ENCODE measurements at regions of chr10 and their contacts with region 1.

Region 1: DNA sequence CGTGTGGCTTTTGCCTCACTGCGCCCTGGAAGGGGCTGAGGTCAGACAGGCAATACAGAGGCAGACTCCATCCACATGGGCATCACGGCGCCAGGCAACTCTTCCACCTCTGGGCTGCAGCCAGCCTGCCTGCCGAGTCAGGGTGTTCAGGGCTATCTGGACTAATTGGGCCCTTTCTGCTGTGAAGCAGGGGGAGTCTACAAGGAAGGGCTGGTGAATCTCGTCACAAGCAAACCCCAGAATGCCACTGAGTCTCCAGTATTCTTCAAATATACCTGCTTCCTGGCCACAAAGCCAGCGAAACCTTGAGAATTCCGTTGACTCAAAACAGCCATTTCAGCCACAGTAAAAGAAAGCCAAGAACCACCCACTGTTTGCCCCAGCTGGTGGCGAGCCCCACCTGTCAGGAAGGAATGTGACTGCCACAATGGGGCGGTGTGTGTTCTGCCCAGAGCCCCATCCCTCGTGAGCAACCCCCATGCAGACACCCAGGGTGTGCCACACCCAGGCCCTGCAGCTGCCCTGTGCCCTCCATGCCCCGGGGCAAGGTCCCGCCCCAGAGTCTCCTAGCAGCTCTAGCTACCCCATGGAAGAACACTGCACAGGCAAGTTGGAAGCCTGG is 117.3 kb downstream of the FAM53B start:
- DNase-seq: no peak
- H3K4me3 ChIP-seq: no peak overlapping the region
- H3K27ac ChIP-seq: no peak overlapping the region
- H3K4me1 ChIP-seq: peaks cover 30% of the 10 kb centered on the region
- H3K27me3 ChIP-seq: no peaks in the 10 kb centered on the region
- CTCF ChIP-seq: no peak
- EP300 ChIP-seq: no peak
- POLR2A ChIP-seq: no peak

Region 2: DNA sequence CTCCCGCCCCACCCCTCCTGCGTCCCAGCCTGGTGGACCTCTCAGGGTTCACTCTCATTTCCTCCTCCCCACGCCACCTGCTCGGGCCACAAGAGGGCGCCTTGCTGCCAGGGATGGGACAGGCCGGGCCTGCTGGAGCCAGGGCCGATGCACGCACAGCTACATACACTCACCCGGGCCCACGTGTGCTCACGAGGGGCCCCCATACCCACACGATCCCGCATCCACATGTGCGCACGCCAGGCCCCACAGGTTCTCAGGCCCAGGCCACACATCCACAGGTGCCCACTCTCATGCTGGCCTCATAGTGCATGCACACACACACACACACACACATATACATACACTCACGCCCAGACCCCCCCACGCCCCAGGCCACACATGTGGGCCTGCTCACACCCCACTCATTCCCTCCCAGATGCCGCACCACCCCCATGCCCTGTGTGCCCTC is 96.6 kb before region 1 on chr10:
- intact Hi-C with region 1: loop called in 1 of 4 experiments (anchors 10 kb)
- DNase-seq: peak; percentile 84 to 92 (median 89)
- H3K4me3 ChIP-seq: no peak overlapping the region
- H3K27ac ChIP-seq: no peak overlapping the region
- H3K4me1 ChIP-seq: peaks cover 10% of the 10 kb centered on the region
- H3K27me3 ChIP-seq: no peaks in the 10 kb centered on the region
- CTCF ChIP-seq: peak; percentile 78 to 86 (median 86)
- EP300 ChIP-seq: no peak
- POLR2A ChIP-seq: no peak

Region 3: GRCh38 chr10:124539935-124540641 is 86.8 kb before region 1 on chr10:
- intact Hi-C with region 1: loop called in 3 of 4 experiments (anchors 5 to 10 kb)
- DNase-seq: peak; percentile 67 to 84 (median 81)
- H3K4me3 ChIP-seq: no peak overlapping the region
- H3K27ac ChIP-seq: no peak overlapping the region
- H3K4me1 ChIP-seq: peaks cover 17% of the 10 kb centered on the region
- H3K27me3 ChIP-seq: no peaks in the 10 kb centered on the region
- CTCF ChIP-seq: peak; percentile 70 to 89 (median 86)
- EP300 ChIP-seq: no peak
- POLR2A ChIP-seq: no peak

Region 4: GRCh38 chr10:124719213-124719851 is 92.5 kb after region 1 on chr10:
- intact Hi-C with region 1: no loop called
- DNase-seq: peak in 2 of 5 donors; percentile 42 to 49
- H3K4me3 ChIP-seq: no peak overlapping the region
- H3K27ac ChIP-seq: peak overlapping the region in 1 of 2 donors; percentile 56
- H3K4me1 ChIP-seq: peaks cover 50% of the 10 kb centered on the region
- H3K27me3 ChIP-seq: no peaks in the 10 kb centered on the region
- CTCF ChIP-seq: peak in 1 of 3 donors; percentile 30
- EP300 ChIP-seq: no peak
- POLR2A ChIP-seq: no peak

Region 5: GRCh38 chr10:125368146-125368545 is 741.3 kb after region 1 on chr10:
- intact Hi-C with region 1: loop called in 1 of 4 experiments (anchors 10 kb)
- DNase-seq: no peak
- H3K4me3 ChIP-seq: no peak overlapping the region
- H3K27ac ChIP-seq: no peak overlapping the region
- H3K4me1 ChIP-seq: no peaks in the 10 kb centered on the region
- H3K27me3 ChIP-seq: no peaks in the 10 kb centered on the region
- CTCF ChIP-seq: no peak
- EP300 ChIP-seq: no peak
- POLR2A ChIP-seq: no peak